HCT116 (cell line): ENCODE measurements at regions of chr13 and their contacts with region 1.

Region 1: GRCh38 chr13:27985600-27985999 is 2.9 kb downstream of the URAD start:
- DNase-seq: no peak
- ATAC-seq: no peak
- H3K4me3 ChIP-seq: no peak overlapping the region
- H3K27ac ChIP-seq: no peak overlapping the region
- H3K4me1 ChIP-seq: no peaks in the 10 kb centered on the region
- H3K27me3 ChIP-seq: no peaks in the 10 kb centered on the region
- CTCF ChIP-seq: no peak
- POLR2A ChIP-seq: no peak
- RAD21 ChIP-seq: no peak

Region 2: DNA sequence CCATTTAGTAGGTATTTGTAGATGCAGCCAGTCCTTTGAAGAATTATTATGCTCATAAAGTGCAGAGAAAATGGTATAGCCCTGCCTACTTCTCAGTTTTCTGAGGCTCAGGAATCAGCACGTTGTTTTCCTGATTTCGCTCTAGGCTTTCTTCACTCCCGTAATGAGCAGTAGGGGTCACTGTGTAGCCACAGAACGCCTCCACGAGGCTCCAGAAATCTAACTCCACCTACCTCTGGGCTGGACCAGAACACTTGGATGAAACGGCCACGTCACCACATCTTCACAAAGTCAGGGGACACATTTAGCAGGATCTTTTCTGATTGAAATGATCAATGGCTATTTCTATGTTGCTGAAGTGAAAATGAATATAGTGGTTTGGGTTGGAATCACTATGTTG is 611.0 kb before region 1 on chr13:
- CTCF ChIA-PET with region 1: interaction called, 7 read pairs
- POLR2A ChIA-PET with region 1: no interaction called
- RAD21 ChIA-PET with region 1: no interaction called
- intact Hi-C with region 1: loop called (anchors 2 kb)
- DNase-seq: peak; percentile 85
- ATAC-seq: peak; percentile 96
- H3K4me3 ChIP-seq: no peak overlapping the region
- H3K27ac ChIP-seq: no peak overlapping the region
- H3K4me1 ChIP-seq: peaks cover 12 to 22% of the 10 kb centered on the region in 2 experiments; a peak in 3 of 4 replicates
- H3K27me3 ChIP-seq: no peaks in the 10 kb centered on the region
- CTCF ChIP-seq: peak; percentile 67 to 82 (median 79); a peak in 5 of 6 replicates
- POLR2A ChIP-seq: no peak
- RAD21 ChIP-seq: peak; percentile 80

Region 3: GRCh38 chr13:27673911-27674310 is 311.7 kb before region 1 on chr13:
- CTCF ChIA-PET with region 1: no interaction called
- POLR2A ChIA-PET with region 1: no interaction called
- RAD21 ChIA-PET with region 1: no interaction called
- intact Hi-C with region 1: no loop called
- DNase-seq: no peak
- ATAC-seq: no peak
- H3K4me3 ChIP-seq: no peak overlapping the region
- H3K27ac ChIP-seq: no peak overlapping the region
- H3K4me1 ChIP-seq: no peaks in the 10 kb centered on the region
- H3K27me3 ChIP-seq: no peaks in the 10 kb centered on the region
- CTCF ChIP-seq: no peak
- POLR2A ChIP-seq: no peak
- RAD21 ChIP-seq: no peak

Region 4: DNA sequence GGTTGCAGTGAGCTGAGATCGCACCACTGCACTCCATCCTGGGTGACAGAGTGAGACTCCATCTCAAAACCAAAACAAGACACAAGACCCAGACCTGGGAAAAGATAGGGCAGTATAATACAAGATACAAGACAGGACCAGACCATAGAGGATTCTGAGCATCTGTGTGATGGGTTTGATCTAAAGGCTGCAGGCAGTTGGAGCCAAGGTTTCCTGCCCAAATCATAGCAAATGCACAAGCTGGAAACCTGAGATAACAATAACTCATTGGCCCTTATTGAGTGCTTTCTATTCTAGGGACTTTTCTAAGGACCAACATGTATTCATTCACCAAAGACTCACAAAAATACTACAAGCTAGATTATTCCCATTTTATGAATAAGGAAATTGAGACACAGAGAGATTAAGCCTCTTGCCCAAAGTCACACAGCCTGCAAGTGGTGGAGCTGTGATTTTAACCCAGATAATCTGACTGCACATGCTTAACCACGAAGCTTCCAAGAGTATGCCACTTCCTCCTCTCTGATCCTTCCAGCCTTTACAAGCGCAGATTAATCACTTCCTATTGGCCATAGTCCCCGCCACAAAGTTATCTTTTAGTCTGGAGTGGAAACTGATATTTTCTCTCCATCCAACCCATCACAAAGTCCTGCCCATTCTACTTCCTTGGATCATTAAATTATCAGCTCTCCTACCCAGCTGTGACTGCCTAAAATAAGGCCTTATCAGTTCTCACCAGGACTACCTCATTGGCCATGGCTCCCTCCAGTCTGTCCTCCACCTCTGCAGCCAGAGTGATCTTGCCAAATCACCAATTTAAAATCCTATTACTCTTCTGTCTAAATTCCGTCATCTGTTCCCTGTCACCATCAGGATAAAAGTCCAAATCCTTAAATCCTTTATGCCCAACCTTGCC is 362.1 kb after region 1 on chr13:
- CTCF ChIA-PET with region 1: no interaction called
- POLR2A ChIA-PET with region 1: no interaction called
- RAD21 ChIA-PET with region 1: no interaction called
- intact Hi-C with region 1: no loop called
- DNase-seq: no peak
- ATAC-seq: no peak
- H3K4me3 ChIP-seq: no peak overlapping the region
- H3K27ac ChIP-seq: no peak overlapping the region
- H3K4me1 ChIP-seq: no peaks in the 10 kb centered on the region
- H3K27me3 ChIP-seq: no peaks in the 10 kb centered on the region
- CTCF ChIP-seq: no peak
- POLR2A ChIP-seq: no peak
- RAD21 ChIP-seq: no peak